Activated naive CD4-positive, alpha-beta T cell treated with anti-CD3 and anti-CD28 coated beads for 36 hours (primary cell): ENCODE measurements at regions of chr12 and their contacts with region 1.

Region 1: GRCh38 chr12:57771708-57772428 is at the start of gene METTL1:
- DNase-seq: peak; percentile 97
- H3K4me3 Mint-ChIP-seq: peak within 1 kb of the TSS; percentile 98
- H3K27ac Mint-ChIP-seq: peak within 1 kb of the TSS; percentile 95
- H3K4me1 Mint-ChIP-seq: peaks cover 26% of the 10 kb centered on the region
- H3K27me3 Mint-ChIP-seq: peaks cover 2% of the 10 kb centered on the region
- total RNA-seq, gene METTL1: 17.3 to 20.4 TPM

Region 2: DNA sequence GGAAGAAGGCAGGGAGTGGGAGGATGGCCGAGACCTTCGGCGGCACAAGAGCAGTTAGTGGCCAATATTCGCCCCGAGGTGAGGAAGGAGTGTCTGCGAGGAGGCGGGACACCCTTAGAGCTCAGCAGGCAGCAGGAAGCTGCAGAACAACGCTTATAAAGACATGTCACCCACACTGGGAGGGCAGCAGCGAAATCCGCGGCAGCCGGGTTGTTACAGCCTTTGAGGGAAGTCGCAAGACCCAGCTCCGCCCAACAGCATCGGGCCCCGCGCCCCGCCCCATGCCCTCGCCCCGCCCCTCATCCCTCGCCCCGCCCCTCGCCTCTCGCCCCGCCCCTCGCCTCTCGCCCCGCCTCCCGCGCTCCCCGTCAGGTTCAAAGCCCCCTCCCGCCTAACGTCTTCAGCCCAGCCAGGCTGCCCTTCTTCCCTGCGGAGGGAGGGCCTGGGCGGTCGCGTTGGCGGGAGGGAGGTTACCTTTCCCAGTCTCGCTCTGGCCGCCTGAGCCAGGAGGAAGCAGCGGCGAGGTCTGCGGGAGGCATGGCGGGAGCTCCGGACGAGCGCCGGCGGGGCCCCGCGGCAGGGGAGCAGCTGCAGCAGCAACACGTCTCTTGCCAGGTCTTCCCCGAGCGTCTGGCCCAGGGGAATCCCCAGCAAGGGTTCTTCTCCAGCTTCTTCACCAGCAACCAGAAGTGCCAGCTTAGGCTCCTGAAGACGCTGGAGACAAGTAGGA is 169.5 kb after region 1 on chr12 and contains the start of gene ATP23:
- CTCF ChIA-PET with region 1: no interaction called
- intact Hi-C with region 1: loop called (anchors 1 kb)
- DNase-seq: peak; percentile 90
- H3K4me3 Mint-ChIP-seq: peak within 1 kb of the TSS; percentile 94
- H3K27ac Mint-ChIP-seq: peak within 1 kb of the TSS; percentile 96
- H3K4me1 Mint-ChIP-seq: peaks cover 38% of the 10 kb centered on the region
- H3K27me3 Mint-ChIP-seq: no peaks in the 10 kb centered on the region
- total RNA-seq, gene ATP23: 11.3 to 11.9 TPM